ENCODE measurements at regions of chr9 and their contacts with region 1.

Region 1: DNA sequence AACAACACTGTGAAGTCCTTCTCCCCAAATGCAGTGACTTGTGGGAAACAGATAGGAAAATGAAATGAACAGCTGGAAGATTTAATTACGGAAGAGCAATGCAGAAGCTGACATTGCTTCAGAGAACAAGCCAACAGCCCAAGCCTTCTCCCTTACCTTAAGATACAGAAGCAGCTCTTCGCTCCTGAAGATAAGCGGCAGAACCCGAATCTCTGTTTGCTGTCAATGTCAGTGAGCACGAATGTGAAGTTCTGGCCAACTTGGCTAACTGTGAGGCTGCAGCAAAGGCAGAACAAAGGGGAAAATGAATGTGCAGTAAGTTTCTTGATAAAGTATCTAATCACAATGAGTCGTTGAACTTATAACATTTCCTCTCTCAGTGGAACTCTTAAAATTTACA is 172.4 kb downstream of the DENND1A start:
- DNase-seq: no peak
- ATAC-seq: no peak
- H3K4me3 ChIP-seq: no peak overlapping the region
- H3K27ac ChIP-seq: no peak overlapping the region
- H3K4me1 ChIP-seq: no peaks in the 10 kb centered on the region
- H3K27me3 ChIP-seq: no peaks in the 10 kb centered on the region
- CTCF ChIP-seq: no peak

Region 2: DNA sequence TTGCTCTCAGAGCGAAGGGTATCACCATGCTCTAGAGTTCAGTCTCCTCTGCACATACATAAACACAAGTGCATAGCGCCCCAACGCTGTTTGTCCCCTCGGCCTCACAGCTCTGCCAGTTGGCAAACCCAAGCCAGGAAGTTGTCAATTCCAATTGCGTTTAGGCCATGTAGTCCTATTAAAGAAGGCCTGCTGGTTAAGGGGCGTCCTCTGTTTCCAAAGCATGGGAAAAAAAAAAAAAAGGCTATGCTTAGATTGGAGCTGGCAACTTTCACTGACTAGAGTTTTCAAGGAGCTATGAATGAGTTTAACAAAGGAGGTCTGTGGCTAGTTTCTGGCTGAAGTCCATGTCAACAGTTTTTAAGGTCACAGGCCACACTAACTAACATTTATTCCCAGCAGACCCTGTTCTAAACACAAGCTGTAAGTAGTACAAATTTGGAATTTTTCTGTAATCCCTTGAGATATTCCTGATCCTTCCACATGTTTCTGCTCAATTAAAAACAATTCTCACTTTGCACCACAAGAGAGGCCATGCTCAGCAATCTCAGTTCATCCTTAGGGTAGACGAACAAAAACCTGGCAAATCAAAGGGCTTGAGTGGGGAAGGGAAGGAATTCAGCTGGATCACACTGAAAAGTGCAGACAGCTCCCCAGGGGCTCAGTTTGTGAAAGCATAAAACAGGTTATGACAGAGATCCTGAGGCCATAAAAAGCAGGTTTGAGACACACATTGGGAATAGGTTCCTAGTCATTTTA is 15.4 kb before region 1 on chr9:
- CTCF ChIA-PET with region 1: no interaction called
- POLR2A ChIA-PET with region 1: interaction called, 14 read pairs
- in situ Hi-C with region 1: no loop called
- intact Hi-C with region 1: no loop called
- DNase-seq: no peak
- ATAC-seq: no peak
- H3K4me3 ChIP-seq: no peak overlapping the region
- H3K27ac ChIP-seq: no peak overlapping the region
- H3K4me1 ChIP-seq: no peaks in the 10 kb centered on the region
- H3K27me3 ChIP-seq: no peaks in the 10 kb centered on the region
- CTCF ChIP-seq: no peak